Left colon (tissue), 2 donors: ENCODE measurements at regions of chr22 and their contacts with region 1.

Region 1: GRCh38 chr22:18077639-18078328 is at the start of gene PEX26:
- DNase-seq: peak; percentile 95 to 96
- ATAC-seq: peak; percentile 86
- total RNA-seq, gene PEX26: 128 to 196 TPM

Region 2: DNA sequence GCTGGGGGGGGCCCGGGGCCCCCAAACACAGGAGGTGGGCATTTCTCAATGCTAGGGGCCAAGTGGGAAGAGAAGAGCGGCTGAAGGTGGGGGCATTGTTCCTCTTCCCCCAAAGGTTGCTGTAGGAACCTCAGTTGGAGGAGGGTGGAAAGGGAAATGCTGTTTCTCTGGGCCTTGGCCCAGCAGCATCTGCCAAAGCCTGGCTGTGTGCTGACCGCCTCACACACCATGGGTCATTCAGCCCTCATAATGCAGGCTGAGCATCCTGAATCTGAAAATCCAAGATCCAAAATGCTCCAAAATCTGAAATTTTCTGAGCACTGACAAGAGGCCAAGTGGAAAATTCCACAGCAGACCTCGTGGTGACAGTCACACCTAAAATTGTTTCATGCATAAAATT is 254.6 kb before region 1 on chr22:
- intact Hi-C with region 1: loop called (anchors 2 to 10 kb)
- DNase-seq: no peak
- ATAC-seq: no peak

Region 3: DNA sequence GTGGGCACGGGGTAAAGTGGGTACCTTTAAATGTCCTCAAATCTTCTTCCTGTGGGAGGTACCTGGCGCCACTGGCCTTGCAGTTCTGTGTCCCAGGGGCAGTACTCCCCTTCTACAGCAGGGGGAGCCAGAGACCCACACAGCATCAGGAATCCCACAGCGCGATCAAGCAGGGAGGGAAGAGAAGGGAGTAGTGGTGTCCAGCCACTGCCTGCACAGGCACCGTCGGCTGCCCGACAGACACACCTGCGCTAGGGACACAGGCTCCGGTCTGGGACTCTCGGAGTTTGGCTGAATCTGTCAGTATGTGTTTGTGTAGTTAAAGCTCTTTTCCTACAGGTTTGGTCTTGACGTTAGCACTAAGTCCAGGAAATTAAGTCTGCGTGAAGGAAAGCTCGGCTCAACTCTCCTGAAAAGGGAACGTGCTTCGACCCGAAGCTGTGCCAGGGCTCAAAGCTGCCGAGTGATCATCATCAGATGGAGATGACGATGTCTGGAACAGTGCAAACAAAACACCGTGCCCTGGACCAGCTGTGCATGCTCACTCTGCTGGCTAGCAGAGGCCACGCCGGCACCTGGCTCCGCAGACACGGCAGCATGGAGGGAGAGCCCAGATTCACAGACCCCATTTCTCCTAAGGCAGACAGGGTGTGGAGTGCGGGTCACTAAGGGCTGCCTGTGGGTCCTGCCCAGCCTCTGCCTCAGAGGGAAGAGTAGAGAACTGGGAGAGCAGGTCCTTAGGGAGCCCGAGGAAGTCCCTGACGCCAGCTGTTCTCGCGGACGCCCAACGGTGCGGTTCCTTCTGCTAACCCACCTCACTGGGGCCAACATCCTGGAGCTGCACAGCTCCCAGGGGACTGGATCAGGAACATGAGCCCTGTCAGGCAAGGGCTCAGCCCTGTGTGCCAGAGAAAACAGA is 247.5 kb before region 1 on chr22:
- intact Hi-C with region 1: loop called (anchors 2 to 10 kb)
- DNase-seq: peak; percentile 79 to 88
- ATAC-seq: peak; percentile 71

Region 4: GRCh38 chr22:18001040-18001893 is 76.5 kb before region 1 on chr22:
- intact Hi-C with region 1: loop called in 1 of 2 experiments (anchors 10 kb)
- DNase-seq: peak; percentile 91 to 92
- ATAC-seq: peak; percentile 92

Region 5: GRCh38 chr22:18136563-18137320 is 59.0 kb after region 1 on chr22:
- intact Hi-C with region 1: no loop called
- DNase-seq: no peak
- ATAC-seq: no peak